AG04449 (cell line): ENCODE measurements at regions of chr15 and their contacts with region 1.

Region 1: GRCh38 chr15:40857601-40858341 is 13.9 kb downstream of the SPINT1 start:
- DNase-seq: no peak
- H3K4me3 ChIP-seq: no peak overlapping the region
- CTCF ChIP-seq: peak; percentile 99

Region 2: DNA sequence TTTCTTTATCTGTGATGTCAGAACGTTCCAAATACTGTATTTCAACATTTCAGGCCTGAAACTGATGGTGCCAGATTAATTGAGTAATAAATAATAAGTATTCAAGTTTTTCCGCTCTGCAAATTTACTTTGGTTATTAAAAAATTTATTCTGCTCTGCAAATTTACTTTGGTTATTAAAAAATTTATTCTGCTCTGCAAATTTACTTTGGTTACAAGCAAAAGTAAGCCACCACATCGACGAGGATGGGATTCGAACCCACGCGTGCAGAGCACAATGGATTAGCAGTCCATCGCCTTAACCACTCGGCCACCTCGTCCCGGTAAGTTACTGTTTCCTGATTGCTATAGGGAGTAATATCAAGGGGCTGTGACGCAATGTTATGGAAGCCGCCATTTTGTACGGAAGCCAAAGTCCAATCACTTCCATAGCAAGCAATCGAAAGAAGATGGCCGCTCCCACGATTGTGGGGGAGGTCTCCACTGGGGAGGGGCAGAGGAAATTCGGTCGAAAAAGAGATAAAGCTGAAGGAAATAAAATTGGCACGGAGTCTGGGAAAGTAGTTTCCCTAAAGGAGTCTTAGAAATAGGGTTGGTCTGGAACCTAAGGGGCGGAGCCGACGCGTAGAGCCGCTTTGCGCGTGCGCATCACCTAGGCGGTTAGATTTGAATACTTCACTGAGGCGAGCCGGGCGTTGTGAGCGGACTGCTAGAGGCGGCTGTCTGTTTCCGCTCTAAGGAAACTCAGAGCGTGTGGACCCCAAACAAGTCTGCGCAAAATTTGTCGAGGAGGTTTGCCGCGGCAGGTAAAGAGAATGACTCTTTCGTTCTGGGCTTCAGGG is 264.0 kb before region 1 on chr15 and contains the start of gene KNL1:
- CTCF ChIA-PET with region 1: interaction called, 14 read pairs
- POLR2A ChIA-PET with region 1: no interaction called
- DNase-seq: peak; percentile 60
- H3K4me3 ChIP-seq: peak within 1 kb of the TSS; percentile 87
- CTCF ChIP-seq: no peak

Region 3: DNA sequence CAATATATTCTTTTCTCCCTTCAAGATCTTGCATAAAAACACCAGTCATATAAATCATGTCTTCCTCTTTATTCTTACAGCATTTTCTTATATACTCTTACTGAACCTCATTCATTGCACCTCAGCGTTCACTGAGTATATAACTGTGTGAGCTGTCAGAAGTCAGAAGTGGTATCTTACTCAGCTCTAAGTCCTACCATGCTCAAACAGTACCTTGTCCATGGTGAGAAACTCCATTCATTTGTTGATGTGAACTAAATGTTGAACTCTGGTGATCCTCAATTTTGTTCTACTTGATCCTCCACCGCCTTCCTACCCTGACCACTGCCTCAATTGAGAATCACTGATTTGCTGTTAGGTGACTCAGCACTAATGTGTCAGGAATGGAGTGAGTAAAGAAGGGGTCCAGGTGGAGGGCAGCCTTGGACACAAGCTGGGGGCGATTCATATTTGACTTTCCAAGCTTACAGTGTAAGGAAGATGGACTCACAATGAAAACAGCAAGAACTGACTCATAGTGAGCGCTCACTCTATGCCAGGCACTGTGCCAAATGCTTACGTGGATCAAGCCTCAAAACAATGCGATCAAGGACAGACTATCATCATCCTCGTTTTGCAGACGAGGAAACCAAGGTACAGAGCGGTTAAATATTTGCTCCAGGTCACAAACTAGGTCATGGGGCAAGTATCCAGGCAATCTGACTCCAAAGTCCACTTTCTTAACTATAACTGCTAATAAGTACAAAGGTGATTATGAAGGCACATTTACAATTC is 64.4 kb before region 1 on chr15:
- CTCF ChIA-PET with region 1: interaction called, 18 read pairs
- POLR2A ChIA-PET with region 1: no interaction called
- DNase-seq: peak; percentile 72
- H3K4me3 ChIP-seq: no peak overlapping the region
- CTCF ChIP-seq: no peak

Region 4: GRCh38 chr15:40814901-40815670 is 42.7 kb before region 1 on chr15:
- CTCF ChIA-PET with region 1: interaction called, 32 read pairs
- POLR2A ChIA-PET with region 1: no interaction called
- DNase-seq: no peak
- H3K4me3 ChIP-seq: no peak overlapping the region
- CTCF ChIP-seq: no peak

Region 5: GRCh38 chr15:40906091-40906990 is 48.6 kb after region 1 on chr15:
- CTCF ChIA-PET with region 1: interaction called, 228 read pairs
- POLR2A ChIA-PET with region 1: no interaction called
- DNase-seq: peak; percentile 65
- H3K4me3 ChIP-seq: peak overlapping the region; percentile 41
- CTCF ChIP-seq: peak; percentile 87

Region 6: GRCh38 chr15:41183581-41183980 is 325.8 kb after region 1 on chr15:
- CTCF ChIA-PET with region 1: interaction called, 42 read pairs
- POLR2A ChIA-PET with region 1: no interaction called
- DNase-seq: no peak
- H3K4me3 ChIP-seq: no peak overlapping the region
- CTCF ChIP-seq: no peak